ENCODE measurements at regions of chr3 and their contacts with region 1.

Region 1: DNA sequence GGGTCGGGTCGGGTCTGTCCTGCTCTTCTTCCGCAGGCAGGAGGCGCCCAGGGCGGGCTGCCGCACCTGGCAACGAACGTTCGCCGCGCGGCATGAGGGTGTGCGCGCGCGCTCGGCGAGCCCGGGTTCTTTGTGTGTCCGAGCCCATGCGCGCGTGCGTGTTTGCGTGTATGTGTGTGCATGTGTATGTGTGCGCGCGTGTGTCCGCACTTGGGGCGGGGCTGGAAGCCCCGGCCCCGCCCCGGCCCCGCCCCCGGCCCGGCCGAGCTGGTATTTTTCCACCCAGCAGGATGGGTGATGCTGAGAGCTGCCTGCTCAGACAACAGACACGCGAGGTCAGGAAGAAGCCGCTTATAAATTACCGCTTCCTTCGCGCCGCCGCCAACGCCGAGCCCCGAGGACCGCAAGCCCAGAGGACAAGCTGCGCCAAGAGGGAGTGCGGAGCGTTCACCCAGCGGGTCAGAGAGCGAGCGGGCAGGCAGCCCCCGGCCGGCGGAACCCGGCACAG is at the start of gene SLC6A6:
- DNase-seq: peak; percentile 95
- ATAC-seq: peak; percentile 81
- H3K4me3 ChIP-seq: peak within 1 kb of the TSS; percentile 72 to 91 (median 83)
- H3K27ac ChIP-seq: peak within 1 kb of the TSS; percentile 74
- H3K4me1 ChIP-seq: peaks cover 65% of the 10 kb centered on the region
- H3K27me3 ChIP-seq: no peaks in the 10 kb centered on the region; a peak in 2 of 5 replicates
- CTCF ChIP-seq: peak; percentile 80
- EP300 ChIP-seq: no peak; a peak in 2 of 4 replicates
- POLR2A ChIP-seq: peak in 1 of 2 experiments; percentile 59; a peak in 2 of 4 replicates
- RAD21 ChIP-seq: peak; percentile 87
- total RNA-seq, gene SLC6A6: 10.7 and 20.7 TPM in 2 replicates

Region 2: GRCh38 chr3:13119471-13120220 is 1282.7 kb before region 1 on chr3:
- CTCF ChIA-PET with region 1: no interaction called
- POLR2A ChIA-PET with region 1: no interaction called
- in situ Hi-C with region 1: no loop called
- intact Hi-C with region 1: no loop called
- DNase-seq: no peak
- ATAC-seq: no peak
- H3K4me3 ChIP-seq: no peak overlapping the region
- H3K27ac ChIP-seq: no peak overlapping the region
- H3K4me1 ChIP-seq: no peaks in the 10 kb centered on the region
- H3K27me3 ChIP-seq: no peaks in the 10 kb centered on the region
- CTCF ChIP-seq: no peak
- EP300 ChIP-seq: no peak
- POLR2A ChIP-seq: no peak
- RAD21 ChIP-seq: no peak

Region 3: GRCh38 chr3:14261229-14261628 is 141.1 kb before region 1 on chr3:
- CTCF ChIA-PET with region 1: interaction called, 4 read pairs
- POLR2A ChIA-PET with region 1: no interaction called
- in situ Hi-C with region 1: no loop called
- intact Hi-C with region 1: loop called (anchors 5 kb)
- DNase-seq: peak; percentile 61
- ATAC-seq: peak; percentile 90
- H3K4me3 ChIP-seq: no peak overlapping the region
- H3K27ac ChIP-seq: no peak overlapping the region
- H3K4me1 ChIP-seq: peaks cover 6% of the 10 kb centered on the region
- H3K27me3 ChIP-seq: peaks cover 1 to 28% of the 10 kb centered on the region in 2 experiments; a peak in 4 of 5 replicates
- CTCF ChIP-seq: peak; percentile 94
- EP300 ChIP-seq: no peak
- POLR2A ChIP-seq: no peak
- RAD21 ChIP-seq: peak; percentile 93

Region 4: DNA sequence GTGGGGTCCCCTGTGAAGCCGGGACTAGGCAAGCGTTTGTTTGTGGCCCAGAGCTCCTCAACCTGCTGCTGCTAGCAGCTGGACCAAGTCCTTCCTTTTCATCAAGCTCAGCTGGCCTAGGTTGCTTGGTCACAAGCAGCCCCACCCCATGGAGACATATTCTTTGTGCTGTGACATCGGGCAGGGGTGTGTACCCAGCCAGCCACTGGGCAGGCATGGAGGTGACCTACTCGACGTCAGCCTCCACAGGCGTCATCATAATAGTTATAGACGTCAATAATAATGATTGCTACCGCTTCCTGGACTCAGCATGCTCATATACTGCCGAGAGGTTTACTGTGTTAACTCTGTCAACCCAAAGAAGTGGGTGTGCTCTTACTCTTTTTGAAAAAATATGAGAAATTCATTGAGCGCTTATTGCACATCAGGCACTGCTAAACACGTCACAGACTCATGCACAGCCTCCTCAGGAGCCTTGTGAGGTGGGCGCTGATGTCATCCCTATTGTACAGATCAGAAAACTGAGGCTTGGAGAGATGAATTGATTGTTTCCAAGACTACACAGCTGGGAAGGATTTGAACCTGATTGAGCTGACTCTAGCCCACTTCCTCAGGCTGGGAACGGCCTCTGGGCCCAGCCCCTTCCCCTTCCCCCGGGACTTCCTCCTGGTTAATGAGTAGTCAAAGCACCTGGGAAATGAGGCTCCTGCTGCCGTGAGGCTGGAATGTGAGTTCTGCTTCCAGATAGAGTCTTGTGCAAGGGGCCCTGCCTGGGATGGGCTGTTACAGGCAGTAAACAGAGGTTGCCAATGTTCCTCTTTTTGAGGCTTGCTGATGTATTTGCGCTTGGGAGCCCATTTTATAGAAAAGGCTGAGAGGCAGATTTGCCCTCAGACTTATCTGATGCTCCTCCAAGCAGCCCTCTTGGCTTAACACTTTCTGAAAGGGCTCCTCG is 16.2 kb after region 1 on chr3:
- CTCF ChIA-PET with region 1: interaction called, 3 read pairs
- POLR2A ChIA-PET with region 1: interaction called, 8 read pairs
- in situ Hi-C with region 1: no loop called
- intact Hi-C with region 1: loop called (anchors 1 kb)
- DNase-seq: peak; percentile 87
- ATAC-seq: peak; percentile 94
- H3K4me3 ChIP-seq: 0 out of 6 replicates have a peak overlapping the region, but pooled peaks of 1 of the 3 experiments have one; percentile 11
- H3K27ac ChIP-seq: peak overlapping the region; percentile 58
- H3K4me1 ChIP-seq: peaks cover 45% of the 10 kb centered on the region
- H3K27me3 ChIP-seq: no peaks in the 10 kb centered on the region
- CTCF ChIP-seq: no peak
- EP300 ChIP-seq: peak in 1 of 2 experiments; percentile 55; a peak in 2 of 4 replicates
- POLR2A ChIP-seq: no peak
- RAD21 ChIP-seq: no peak

Region 5: GRCh38 chr3:14431892-14432834 is 29.8 kb after region 1 on chr3:
- CTCF ChIA-PET with region 1: no interaction called
- POLR2A ChIA-PET with region 1: interaction called, 7 read pairs
- in situ Hi-C with region 1: no loop called
- intact Hi-C with region 1: loop called (anchors 2 kb)
- DNase-seq: peak; percentile 82
- ATAC-seq: peak; percentile 97
- H3K4me3 ChIP-seq: peak overlapping the region in 2 of 3 experiments; percentile 7 to 17; a peak in 2 of 6 replicates
- H3K27ac ChIP-seq: peak overlapping the region; percentile 73
- H3K4me1 ChIP-seq: peaks cover 57% of the 10 kb centered on the region
- H3K27me3 ChIP-seq: no peaks in the 10 kb centered on the region
- CTCF ChIP-seq: peak; percentile 28; the same call in 1 of the 2 replicates
- EP300 ChIP-seq: 0 out of 4 replicates have a peak, but pooled peaks of 1 of the 2 experiments have one; percentile 51
- POLR2A ChIP-seq: no peak
- RAD21 ChIP-seq: no peak

Region 6: DNA sequence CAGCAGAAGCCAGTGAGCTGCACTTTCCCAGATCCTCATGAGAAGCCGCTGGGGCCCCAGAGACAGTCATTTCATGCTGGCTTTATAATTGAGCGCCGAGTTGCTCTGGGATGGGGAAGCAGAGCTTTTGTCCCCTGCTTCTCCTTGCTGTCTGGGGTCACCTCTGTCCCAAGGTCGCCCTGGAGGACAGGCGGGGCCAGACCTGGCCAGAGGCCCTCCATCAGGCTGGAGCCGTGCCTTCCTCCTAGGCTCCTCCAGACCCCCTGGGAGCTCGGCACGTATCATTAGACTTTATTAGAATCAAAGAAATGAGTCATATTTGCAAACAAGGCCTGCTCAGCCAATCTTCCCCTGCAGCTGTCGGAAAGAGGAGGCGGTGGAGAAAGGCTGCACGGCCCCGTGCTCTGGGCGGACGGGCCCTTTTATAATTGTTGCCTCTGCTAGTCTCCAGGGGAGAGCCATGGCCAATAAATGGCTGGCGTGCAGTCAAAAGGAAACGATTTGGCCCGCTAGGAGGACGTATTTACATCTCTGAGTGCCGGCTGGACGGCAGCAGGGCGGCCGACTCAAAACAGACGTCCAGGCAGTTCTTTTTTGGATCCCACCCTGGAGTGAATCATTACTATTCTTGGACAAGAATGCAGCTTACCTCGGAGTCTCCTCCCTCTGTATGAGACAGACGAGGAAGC is 50.5 kb after region 1 on chr3:
- CTCF ChIA-PET with region 1: no interaction called
- POLR2A ChIA-PET with region 1: interaction called, 11 read pairs
- in situ Hi-C with region 1: no loop called
- intact Hi-C with region 1: no loop called
- DNase-seq: no peak
- ATAC-seq: no peak
- H3K4me3 ChIP-seq: no peak overlapping the region
- H3K27ac ChIP-seq: no peak overlapping the region
- H3K4me1 ChIP-seq: peaks cover 19% of the 10 kb centered on the region
- H3K27me3 ChIP-seq: no peaks in the 10 kb centered on the region
- CTCF ChIP-seq: no peak
- EP300 ChIP-seq: no peak
- POLR2A ChIP-seq: no peak
- RAD21 ChIP-seq: no peak

Region 7: DNA sequence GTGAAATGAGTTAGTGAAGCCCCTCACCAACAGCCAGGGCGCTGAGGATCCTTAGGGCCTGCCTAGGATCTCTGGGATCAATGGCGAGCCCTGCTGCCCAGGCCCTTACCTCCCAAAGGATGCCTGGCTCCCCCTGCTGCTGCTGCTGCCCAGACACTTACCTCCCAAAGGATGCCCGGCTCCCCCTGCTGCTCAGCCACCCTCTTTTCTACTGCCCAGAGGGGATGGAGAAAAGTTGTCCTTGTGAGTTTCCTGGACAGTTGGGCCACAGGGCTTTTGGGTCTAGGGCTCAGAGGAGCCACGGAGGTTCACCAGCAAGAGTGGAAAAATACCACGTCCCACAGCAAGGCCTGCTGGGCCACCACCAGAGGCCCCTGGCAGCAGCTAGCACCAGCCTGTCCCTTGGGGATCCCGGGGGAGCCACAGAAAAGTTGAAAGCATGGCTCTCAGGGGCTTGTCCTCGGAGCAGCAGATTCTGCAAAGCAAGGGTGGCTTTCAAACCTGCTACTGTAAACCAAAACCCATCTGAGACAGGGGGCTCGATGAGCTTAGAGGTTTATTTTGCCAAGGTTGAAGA is 59.5 kb after region 1 on chr3:
- CTCF ChIA-PET with region 1: interaction called, 15 read pairs
- POLR2A ChIA-PET with region 1: no interaction called
- in situ Hi-C with region 1: loop called (anchors 5 kb)
- intact Hi-C with region 1: loop called (anchors 1 kb)
- DNase-seq: peak; percentile 50
- ATAC-seq: peak; percentile 92
- H3K4me3 ChIP-seq: no peak overlapping the region
- H3K27ac ChIP-seq: no peak overlapping the region
- H3K4me1 ChIP-seq: no peaks in the 10 kb centered on the region
- H3K27me3 ChIP-seq: no peaks in the 10 kb centered on the region
- CTCF ChIP-seq: peak; percentile 87
- EP300 ChIP-seq: no peak
- POLR2A ChIP-seq: no peak
- RAD21 ChIP-seq: peak; percentile 94

Region 8: DNA sequence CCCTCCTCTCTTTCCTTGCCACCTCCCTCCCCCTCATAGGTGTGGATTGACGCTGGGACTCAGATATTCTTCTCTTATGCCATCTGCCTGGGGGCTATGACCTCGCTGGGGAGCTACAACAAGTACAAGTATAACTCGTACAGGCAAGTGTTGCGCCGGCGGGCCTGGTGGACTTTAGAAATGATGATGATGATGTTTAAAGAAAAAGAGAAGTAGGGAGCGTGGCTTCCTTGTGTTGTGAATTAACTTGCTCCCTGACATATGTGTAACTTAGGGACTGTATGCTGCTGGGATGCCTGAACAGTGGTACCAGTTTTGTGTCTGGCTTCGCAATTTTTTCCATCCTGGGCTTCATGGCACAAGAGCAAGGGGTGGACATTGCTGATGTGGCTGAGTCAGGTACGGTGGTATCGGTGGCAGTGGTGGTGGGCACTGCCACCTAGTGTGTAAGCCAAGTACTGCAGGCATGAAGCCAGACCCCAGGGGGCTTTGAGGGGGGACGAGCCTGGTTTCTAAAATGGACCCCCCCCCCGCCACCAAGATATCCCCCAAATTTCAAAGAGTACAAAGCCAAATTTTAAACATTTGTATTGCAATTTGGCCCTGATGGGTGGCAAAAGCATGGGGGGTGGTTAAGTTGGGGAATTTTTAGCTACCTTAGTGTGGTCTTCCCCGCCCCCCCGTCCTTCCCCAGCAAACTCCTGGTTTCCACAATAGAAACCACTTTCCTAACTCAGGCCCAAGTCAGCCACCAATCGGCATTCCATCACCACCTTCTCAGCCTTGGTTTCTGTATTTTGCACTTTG is 65.7 kb after region 1 on chr3:
- CTCF ChIA-PET with region 1: interaction called, 11 read pairs
- POLR2A ChIA-PET with region 1: no interaction called
- in situ Hi-C with region 1: loop called (anchors 5 kb)
- intact Hi-C with region 1: loop called (anchors 2 kb)
- DNase-seq: peak; percentile 8
- ATAC-seq: peak; percentile 73
- H3K4me3 ChIP-seq: no peak overlapping the region
- H3K27ac ChIP-seq: no peak overlapping the region
- H3K4me1 ChIP-seq: no peaks in the 10 kb centered on the region
- H3K27me3 ChIP-seq: no peaks in the 10 kb centered on the region
- CTCF ChIP-seq: peak; percentile 87
- EP300 ChIP-seq: no peak
- POLR2A ChIP-seq: no peak
- RAD21 ChIP-seq: peak; percentile 87